Activated T-helper 2 cell treated with anti-CD3 and anti-CD28 coated beads, Interferon-gamma antibody, Interleukin-2, Interleukin-4, amounts not matched to agents 10 μg/mL and 5 μg/mL and 100 μg/mL, durations not matched to agents 14 hours and 24 hours and 36 hours (primary cell): ENCODE measurements at regions of chr9 and their contacts with region 1.

Region 1: DNA sequence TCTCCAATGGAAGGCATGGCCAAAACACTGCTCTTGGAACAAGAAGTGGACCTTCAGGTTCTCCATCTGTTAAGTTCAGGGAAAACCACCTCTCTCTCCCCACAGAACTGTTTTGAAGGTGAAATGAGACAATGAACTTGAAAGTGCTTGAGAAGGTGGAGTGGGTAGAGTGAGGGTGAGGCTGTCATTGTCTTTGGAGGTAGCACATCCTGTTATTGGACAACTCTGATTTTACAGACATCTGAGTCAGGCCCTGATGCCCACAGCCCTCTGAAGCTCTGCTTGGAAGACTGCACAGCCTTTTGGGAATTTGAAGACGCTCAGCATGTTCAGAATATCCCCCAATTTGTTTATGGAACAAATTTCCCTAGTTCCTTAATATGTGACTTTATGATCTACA is 27.6 kb upstream of the TEX48 start:
- DNase-seq: no peak
- H3K4me3 Mint-ChIP-seq: no peak overlapping the region
- H3K27ac Mint-ChIP-seq: peak overlapping the region; percentile 70
- H3K4me1 Mint-ChIP-seq: peaks cover 62% of the 10 kb centered on the region
- H3K27me3 Mint-ChIP-seq: no peaks in the 10 kb centered on the region

Region 2: GRCh38 chr9:114696814-114697544 is 12.7 kb before region 1 on chr9:
- intact Hi-C with region 1: loop called (anchors 1 kb)
- DNase-seq: peak; percentile 75
- H3K4me3 Mint-ChIP-seq: peak overlapping the region; percentile 52
- H3K27ac Mint-ChIP-seq: peak overlapping the region; percentile 96
- H3K4me1 Mint-ChIP-seq: peaks cover 87% of the 10 kb centered on the region
- H3K27me3 Mint-ChIP-seq: no peaks in the 10 kb centered on the region